HEK293 (cell line): ENCODE measurements at regions of chr20 and their contacts with region 1.

Region 1: DNA sequence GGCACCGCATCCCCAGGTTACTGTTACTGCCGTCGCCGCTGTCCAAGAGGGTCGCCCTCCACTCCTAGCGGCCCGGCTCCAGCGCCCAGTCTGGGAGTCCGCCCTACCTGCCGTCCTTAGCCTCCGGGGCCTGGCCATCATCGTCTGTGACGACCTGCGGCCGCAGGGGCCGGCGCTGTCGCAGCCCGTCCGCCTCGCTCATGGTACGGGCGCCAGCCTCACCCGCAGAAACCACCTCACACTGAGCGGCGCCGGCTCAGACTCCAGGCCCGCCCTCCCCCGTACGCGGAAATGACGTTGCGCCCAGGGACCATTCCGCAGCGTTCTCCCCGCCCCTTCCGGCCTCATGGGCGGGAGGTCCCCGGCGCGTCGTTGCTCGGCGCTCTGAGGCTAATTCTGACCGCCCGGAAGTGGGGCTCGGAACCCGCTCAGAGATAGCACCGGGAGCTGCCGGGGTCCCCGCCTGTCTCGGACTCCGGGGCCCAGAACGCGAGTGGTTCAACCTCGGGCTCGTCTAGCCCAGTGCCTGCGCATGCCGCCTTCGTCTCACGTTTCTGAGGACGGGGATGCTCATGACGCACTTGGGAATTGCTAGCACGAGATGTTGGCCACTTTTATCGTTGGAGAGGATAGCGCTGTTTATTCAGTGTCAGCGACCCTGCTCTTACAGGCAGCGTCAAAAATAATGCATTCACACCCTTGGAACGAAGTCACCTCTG is at the start of gene APMAP:
- H3K4me3 ChIP-seq: peak within 1 kb of the TSS; percentile 92
- H3K27ac ChIP-seq: peak within 1 kb of the TSS; percentile 62; the same call in 1 of the 2 replicates
- H3K4me1 ChIP-seq: no peaks in the 10 kb centered on the region; the same call in none of the 2 replicates
- CTCF ChIP-seq: peak; percentile 46; the same call in 1 of the 2 replicates

Region 2: DNA sequence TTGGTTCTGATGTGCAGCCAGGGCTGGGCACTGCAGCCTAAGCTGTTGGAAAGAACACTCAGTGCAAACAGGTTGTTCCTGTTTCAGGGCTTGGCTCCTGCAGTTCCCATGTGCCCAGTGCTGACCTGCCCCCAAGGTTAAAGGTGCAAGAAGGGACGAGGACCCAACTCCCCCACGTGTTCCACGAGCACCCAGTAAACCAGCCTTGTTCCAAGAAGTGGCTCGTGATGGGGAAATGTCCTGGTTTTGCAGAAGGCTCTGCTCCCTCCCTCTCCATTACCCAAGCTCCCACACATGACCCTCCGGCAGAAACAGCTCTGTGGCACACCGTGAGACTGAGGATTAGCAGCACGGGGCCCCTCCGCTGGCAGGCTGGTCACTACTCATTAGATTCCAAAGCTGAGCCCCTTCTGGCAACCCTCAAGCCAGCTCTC is 55.9 kb after region 1 on chr20:
- CTCF ChIA-PET with region 1: no interaction called
- POLR2A ChIA-PET with region 1: no interaction called
- H3K4me3 ChIP-seq: no peak overlapping the region
- H3K27ac ChIP-seq: no peak overlapping the region
- H3K4me1 ChIP-seq: no peaks in the 10 kb centered on the region
- CTCF ChIP-seq: no peak

Region 3: GRCh38 chr20:25065625-25066338 is 73.1 kb after region 1 on chr20:
- CTCF ChIA-PET with region 1: interaction called, 70 read pairs
- POLR2A ChIA-PET with region 1: no interaction called
- H3K4me3 ChIP-seq: no peak overlapping the region
- H3K27ac ChIP-seq: no peak overlapping the region
- H3K4me1 ChIP-seq: no peaks in the 10 kb centered on the region
- CTCF ChIP-seq: peak; percentile 37; the same call in 1 of the 2 replicates

Region 4: DNA sequence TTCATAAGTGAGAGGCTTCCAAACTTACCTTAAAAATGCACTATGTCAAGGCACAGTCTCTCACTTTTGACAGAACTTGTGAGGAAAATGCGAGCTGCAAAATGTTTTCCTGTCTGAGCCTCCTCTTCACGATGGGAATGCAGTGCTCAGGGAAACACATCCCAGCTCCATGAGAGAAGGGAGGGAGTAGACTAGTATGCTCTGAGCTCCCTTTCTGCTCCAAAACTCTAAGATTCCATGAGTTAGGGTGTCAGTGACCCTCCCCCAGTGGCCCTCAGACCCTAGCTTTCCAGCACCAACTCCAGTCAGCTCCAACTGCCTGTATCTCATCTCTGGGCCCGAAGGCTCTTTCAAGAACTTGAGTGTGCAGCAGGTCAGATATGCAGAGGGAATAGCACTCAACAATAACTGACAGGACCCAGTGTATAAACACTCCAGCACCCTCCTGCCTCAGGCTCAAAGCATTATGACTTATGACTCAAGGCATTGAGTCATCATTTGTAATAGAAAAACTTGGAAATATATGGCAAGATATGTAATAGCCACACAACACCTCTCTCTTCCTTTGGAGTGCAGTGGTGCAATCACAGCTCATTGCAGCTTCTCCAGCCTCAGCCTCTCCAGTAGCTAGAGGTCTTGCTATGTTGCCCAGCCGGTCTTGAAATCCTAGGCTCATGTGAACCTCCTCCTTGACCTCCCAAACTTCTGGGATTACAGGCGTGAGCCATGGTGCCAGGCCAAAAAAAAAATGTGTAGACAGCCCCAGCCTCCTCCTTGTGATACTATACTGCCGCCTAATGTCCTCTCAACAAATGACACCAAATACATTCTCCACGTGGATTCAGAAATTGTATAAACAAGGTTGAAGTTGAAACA is 186.2 kb after region 1 on chr20:
- CTCF ChIA-PET with region 1: interaction called, 24 read pairs
- POLR2A ChIA-PET with region 1: no interaction called
- H3K4me3 ChIP-seq: no peak overlapping the region
- H3K27ac ChIP-seq: no peak overlapping the region
- H3K4me1 ChIP-seq: no peaks in the 10 kb centered on the region
- CTCF ChIP-seq: peak; percentile 60; the same call in 1 of the 2 replicates